Vagina (tissue), 2 donors: ENCODE measurements at regions of chr4 and their contacts with region 1.

Region 1: GRCh38 chr4:107482521-107482920 is 237.5 kb downstream of the PAPSS1 start:
- DNase-seq: no peak
- H3K4me3 ChIP-seq: no peak overlapping the region
- H3K27ac ChIP-seq: no peak overlapping the region
- H3K4me1 ChIP-seq: no peaks in the 10 kb centered on the region
- H3K27me3 ChIP-seq: no peaks in the 10 kb centered on the region
- CTCF ChIP-seq: no peak
- POLR2A ChIP-seq: no peak

Region 2: DNA sequence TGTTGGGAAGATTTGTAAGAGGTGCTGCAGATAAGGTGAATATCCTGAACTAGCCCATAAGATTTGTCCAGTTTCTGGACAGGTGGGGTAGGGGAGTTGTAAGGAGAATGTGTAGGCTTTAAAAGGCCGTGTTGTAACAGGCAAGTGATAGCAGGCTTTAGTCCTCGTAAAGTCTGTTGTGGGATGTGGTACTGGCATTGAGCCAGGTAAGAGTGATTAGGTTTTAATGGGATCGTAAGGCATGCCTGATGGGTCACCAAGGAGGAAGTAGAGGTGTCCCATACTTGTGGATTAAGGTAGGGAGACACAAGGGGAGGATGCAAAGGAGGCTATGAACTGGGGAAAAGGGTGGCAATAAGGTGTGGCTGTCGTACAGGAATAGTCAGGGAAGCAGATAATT is 189.5 kb before region 1 on chr4:
- intact Hi-C with region 1: no loop called
- DNase-seq: no peak
- H3K4me3 ChIP-seq: no peak overlapping the region
- H3K27ac ChIP-seq: no peak overlapping the region
- H3K4me1 ChIP-seq: no peaks in the 10 kb centered on the region
- H3K27me3 ChIP-seq: no peaks in the 10 kb centered on the region
- CTCF ChIP-seq: no peak
- POLR2A ChIP-seq: no peak

Region 3: DNA sequence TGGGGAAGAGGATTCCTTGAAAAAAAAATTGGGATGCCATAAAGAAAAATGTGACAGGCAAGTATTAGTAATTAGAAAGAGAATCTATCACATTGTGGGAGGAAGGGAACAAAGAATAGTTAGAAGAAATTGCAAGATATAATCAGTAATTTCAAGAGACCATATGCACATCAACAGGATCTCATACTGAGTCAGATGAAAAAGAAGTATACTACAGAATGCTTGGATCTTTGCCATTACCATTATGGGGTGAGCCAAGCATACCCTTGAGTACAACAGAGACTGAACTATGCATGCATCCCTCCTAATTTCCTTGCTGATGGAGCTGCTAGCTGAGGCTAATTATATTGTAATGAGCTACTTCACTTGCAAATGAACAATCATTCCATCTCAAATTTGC is 50.1 kb before region 1 on chr4:
- intact Hi-C with region 1: loop called (anchors 1 kb)
- DNase-seq: no peak
- H3K4me3 ChIP-seq: no peak overlapping the region
- H3K27ac ChIP-seq: no peak overlapping the region
- H3K4me1 ChIP-seq: no peaks in the 10 kb centered on the region
- H3K27me3 ChIP-seq: no peaks in the 10 kb centered on the region
- CTCF ChIP-seq: no peak
- POLR2A ChIP-seq: no peak